ENCODE measurements at regions of chr3 and their contacts with region 1.

Region 1: DNA sequence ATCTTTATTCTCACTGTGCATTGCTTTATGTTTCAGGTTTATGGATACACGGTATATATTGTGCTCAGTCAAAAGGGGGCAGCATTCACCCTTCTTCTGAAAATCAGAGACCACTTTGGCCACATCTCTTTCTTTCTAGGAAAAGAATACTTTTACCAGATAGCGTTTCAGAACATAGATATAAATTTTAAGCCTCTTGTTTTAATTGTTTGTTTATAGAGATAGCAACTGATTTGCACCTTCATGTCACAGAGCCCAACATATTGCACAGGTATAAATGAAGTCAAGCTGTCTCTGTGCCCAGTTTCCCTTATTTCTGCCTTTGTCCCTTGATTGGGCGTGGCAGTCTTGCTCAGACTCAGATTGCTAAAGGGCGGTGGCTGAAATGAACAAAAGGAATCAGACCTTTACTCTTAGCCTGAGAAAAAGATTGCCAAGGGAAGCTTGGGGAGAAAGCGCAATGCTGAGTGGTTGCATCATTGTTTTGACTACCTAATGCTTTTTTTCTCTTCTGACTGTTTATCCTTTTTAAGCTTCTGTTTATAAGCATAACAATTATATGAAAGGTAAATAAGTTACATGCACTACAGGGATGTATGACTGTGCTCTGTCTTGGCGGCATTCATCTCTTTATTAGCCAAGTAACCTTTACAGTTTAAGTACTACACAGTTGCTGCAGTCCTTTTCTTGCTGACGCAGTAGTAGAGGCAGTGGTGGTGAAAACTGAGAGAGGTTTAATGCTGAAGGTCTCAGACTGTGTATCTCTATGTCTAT is 70.8 kb upstream of the ZBTB20 start:
- DNase-seq: no peak
- H3K4me3 ChIP-seq: no peak overlapping the region
- H3K27ac ChIP-seq: no peak overlapping the region
- H3K4me1 ChIP-seq: peaks cover 3 to 25% (median 17%) of the 10 kb centered on the region in 6 donors
- H3K27me3 ChIP-seq: no peaks in the 10 kb centered on the region
- CTCF ChIP-seq: peak in 9 of 11 experiments; percentile 17 to 75 (median 57)
- POLR2A ChIP-seq: no peak

Region 2: GRCh38 chr3:115380883-115381572 is 163.2 kb after region 1 on chr3:
- intact Hi-C with region 1: no loop called
- DNase-seq: no peak
- H3K4me3 ChIP-seq: no peak overlapping the region
- H3K27ac ChIP-seq: no peak overlapping the region
- H3K4me1 ChIP-seq: no peaks in the 10 kb centered on the region
- H3K27me3 ChIP-seq: no peaks in the 10 kb centered on the region
- CTCF ChIP-seq: no peak
- POLR2A ChIP-seq: no peak

Region 3: DNA sequence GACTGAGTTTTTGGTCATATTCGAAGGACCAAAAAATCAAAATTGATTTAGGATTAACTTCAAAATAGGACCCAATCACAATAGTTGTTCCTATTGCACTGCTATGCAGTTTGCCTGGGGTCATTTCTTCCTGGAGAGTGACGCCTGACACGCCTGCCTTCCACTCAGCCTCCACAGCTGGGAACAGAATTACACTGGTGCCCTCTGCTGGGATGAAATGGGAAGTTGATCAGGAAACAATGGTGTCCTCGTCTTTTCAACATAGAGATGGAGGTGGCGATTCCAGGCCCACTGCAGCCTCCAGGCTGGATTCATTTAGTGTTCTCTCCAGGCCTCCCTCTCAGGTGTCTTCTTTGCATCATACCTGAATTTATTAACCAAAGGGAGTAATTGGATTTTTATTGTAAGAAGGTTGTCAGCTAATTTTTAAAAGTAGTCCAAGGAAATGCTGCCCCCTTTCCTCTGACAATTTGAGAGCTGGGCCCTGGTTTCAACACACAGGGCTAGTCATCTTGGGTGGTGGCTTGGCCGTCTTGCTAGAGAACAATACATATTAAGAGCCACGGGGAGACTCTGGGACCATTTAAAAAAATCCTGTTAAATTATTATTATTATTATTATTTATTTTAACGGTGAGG is 475.1 kb after region 1 on chr3:
- intact Hi-C with region 1: loop called (anchors 5 kb)
- DNase-seq: peak; percentile 76
- H3K4me3 ChIP-seq: no peak overlapping the region
- H3K27ac ChIP-seq: no peak overlapping the region
- H3K4me1 ChIP-seq: peaks cover 0 to 7% (median 4%) of the 10 kb centered on the region in 6 donors
- H3K27me3 ChIP-seq: no peaks in the 10 kb centered on the region
- CTCF ChIP-seq: peak; percentile 43 to 89 (median 75)
- POLR2A ChIP-seq: no peak

Measured in spleen (tissue), 13 donors.